ENCODE measurements at regions of chr6 and their contacts with region 1.

Region 1: DNA sequence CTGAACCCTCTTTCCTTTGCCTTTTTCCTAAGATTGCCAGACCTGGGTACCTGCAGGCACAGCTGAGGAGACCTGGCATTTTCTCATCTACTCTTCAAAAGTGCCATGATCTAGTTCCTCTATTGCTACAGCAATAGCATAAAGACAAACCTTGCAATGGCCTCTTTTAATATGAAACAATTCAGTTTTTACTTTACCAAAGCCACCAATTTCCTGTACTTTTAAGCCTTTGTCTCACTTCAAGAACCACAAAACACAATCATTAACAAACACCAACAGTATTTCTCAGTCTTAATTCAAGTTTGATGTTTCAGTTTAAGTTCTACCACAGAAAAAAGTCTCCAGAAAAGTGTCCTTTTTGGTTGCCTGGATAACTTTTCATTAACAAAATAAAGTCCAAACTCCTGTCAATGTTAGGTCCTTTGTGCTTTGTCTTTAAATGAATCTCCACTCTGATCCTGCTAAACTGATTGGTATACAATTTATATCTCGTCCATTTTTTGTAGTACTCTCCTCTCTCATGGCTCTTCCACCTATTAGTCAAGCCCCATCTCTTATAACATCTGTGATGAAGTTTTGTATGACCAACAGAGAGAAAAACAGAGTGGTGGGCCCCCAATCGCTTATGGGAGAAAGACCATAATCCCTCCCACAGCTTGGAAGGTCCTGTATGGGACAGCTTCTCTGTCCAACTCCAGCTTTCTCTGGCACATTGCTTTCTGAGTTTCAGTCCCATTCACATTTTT is 50.5 kb upstream of the THEMIS start:
- DNase-seq: peak in 7 of 9 donors; percentile 31 to 78 (median 69)
- ATAC-seq: peak; percentile 77
- H3K4me3 ChIP-seq: peak overlapping the region; percentile 21
- H3K4me3 Mint-ChIP-seq: peak overlapping the region; percentile 70 to 84 (median 79)
- H3K27ac ChIP-seq: peak overlapping the region; percentile 30
- H3K27ac Mint-ChIP-seq: peak overlapping the region; percentile 84 to 94 (median 91)
- H3K4me1 ChIP-seq: peaks cover 35 to 42% of the 10 kb centered on the region in 2 donors
- H3K4me1 Mint-ChIP-seq: peaks cover 32 to 74% (median 62%) of the 10 kb centered on the region in 7 donors
- H3K27me3 ChIP-seq: no peaks in the 10 kb centered on the region
- H3K27me3 Mint-ChIP-seq: no peaks in the 10 kb centered on the region

Region 2: DNA sequence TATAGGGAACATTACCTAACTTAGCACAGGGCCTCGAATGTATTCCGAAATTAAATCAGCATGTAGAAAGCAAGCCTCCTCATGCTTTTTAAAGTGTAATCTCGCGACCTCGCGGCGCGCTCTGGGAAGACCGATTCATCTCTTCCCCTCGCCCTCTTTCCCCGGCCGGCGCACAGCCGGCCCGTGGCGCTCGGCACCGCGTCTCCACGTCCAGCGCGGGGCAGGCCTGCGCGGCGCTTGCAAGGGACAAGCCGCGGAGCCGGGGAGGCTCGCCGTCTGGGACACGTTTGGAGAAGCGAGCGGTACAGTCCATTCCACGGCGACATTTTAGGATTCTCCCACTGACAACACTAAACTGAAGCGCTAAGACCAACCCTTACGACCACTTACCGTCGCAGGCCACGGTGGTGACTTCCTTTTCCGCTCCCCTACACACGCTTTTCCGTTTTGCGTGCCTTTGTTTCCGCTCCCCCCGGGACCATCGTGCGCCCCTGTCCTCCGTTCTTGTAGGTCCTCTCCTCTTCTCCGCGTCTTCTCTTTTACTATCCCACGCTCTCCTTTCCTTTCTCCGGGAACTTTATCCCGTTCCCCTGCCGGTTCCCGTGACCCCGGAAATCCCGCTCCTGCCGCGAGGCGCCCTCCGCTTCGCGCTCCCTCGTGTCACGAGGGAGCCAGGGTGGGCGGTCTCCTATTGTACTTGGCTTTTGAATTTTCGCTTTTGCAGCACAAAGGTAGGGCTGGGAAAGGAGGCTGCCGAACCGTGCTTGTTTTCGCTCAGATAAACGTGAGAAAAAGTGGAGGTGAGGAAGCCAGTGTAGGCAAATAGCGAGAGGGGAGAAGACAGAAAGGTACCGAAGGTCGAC is 608.2 kb before region 1 on chr6 and contains the start of gene ECHDC1:
- CTCF ChIA-PET with region 1: no interaction called
- POLR2A ChIA-PET with region 1: no interaction called
- intact Hi-C with region 1: loop called in 1 of 2 experiments (anchors 10 kb)
- DNase-seq: peak; percentile 45 to 76 (median 70)
- ATAC-seq: peak; percentile 87
- H3K4me3 ChIP-seq: peak within 1 kb of the TSS; percentile 83
- H3K4me3 Mint-ChIP-seq: no peak within 1 kb of the TSS
- H3K27ac ChIP-seq: peak within 1 kb of the TSS; percentile 91
- H3K27ac Mint-ChIP-seq: no peak within 1 kb of the TSS
- H3K4me1 ChIP-seq: peaks cover 34 to 39% of the 10 kb centered on the region in 2 donors
- H3K4me1 Mint-ChIP-seq: peaks cover 0 to 12% (median 9%) of the 10 kb centered on the region in 7 donors
- H3K27me3 ChIP-seq: no peaks in the 10 kb centered on the region
- H3K27me3 Mint-ChIP-seq: no peaks in the 10 kb centered on the region
- total RNA-seq, gene ECHDC1: 18.1 to 46.5 (median 34.3) TPM

Region 3: GRCh38 chr6:127918506-127919427 is 32.6 kb before region 1 on chr6:
- CTCF ChIA-PET with region 1: interaction called, 5 read pairs
- POLR2A ChIA-PET with region 1: interaction called, 4 read pairs
- intact Hi-C with region 1: loop called (anchors 1 kb)
- DNase-seq: peak in 7 of 9 donors; percentile 68 to 85 (median 80)
- ATAC-seq: peak; percentile 86
- H3K4me3 ChIP-seq: peak overlapping the region; percentile 79
- H3K4me3 Mint-ChIP-seq: peak overlapping the region; percentile 74 to 96 (median 88)
- H3K27ac ChIP-seq: peak overlapping the region; percentile 50
- H3K27ac Mint-ChIP-seq: peak overlapping the region; percentile 83 to 98 (median 93)
- H3K4me1 ChIP-seq: peaks cover 58 to 65% of the 10 kb centered on the region in 2 donors
- H3K4me1 Mint-ChIP-seq: peaks cover 33 to 95% (median 85%) of the 10 kb centered on the region in 7 donors
- H3K27me3 ChIP-seq: no peaks in the 10 kb centered on the region
- H3K27me3 Mint-ChIP-seq: no peaks in the 10 kb centered on the region

Region 4: GRCh38 chr6:127938701-127939100 is 12.6 kb before region 1 on chr6:
- CTCF ChIA-PET with region 1: interaction called, 4 read pairs
- POLR2A ChIA-PET with region 1: interaction called, 15 read pairs
- intact Hi-C with region 1: loop called (anchors 1 kb)
- DNase-seq: no peak
- ATAC-seq: no peak
- H3K4me3 ChIP-seq: no peak overlapping the region
- H3K4me3 Mint-ChIP-seq: peak overlapping the region in 2 of 10 donors; percentile 14 to 39
- H3K27ac ChIP-seq: no peak overlapping the region
- H3K27ac Mint-ChIP-seq: peak overlapping the region in 5 of 9 donors; percentile 28 to 97 (median 57)
- H3K4me1 ChIP-seq: peaks cover 25 to 40% of the 10 kb centered on the region in 2 donors
- H3K4me1 Mint-ChIP-seq: peaks cover 21 to 81% (median 63%) of the 10 kb centered on the region in 7 donors
- H3K27me3 ChIP-seq: no peaks in the 10 kb centered on the region
- H3K27me3 Mint-ChIP-seq: no peaks in the 10 kb centered on the region

Region 5: DNA sequence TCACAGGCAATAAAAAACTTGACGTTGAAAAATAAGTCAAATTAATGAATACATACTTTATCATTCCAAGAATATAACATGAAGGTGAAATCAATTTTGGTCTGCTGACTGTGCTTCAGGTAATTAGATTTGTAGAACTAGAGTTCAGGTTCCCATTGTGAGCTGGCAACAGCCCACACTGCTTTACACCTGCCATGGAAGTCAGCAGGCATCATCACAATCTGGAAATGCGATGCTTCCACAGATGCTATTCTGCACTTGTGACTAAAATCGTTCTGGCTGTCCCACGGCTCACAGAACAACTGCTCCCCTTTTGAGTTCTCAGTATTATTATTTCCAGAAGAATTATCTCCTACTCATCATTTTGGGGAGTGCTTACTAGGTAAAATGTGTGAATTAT is 12.2 kb after region 1 on chr6:
- CTCF ChIA-PET with region 1: interaction called, 6 read pairs
- POLR2A ChIA-PET with region 1: interaction called, 5 read pairs
- intact Hi-C with region 1: loop called (anchors 1 kb)
- DNase-seq: no peak
- ATAC-seq: no peak
- H3K4me3 ChIP-seq: no peak overlapping the region
- H3K4me3 Mint-ChIP-seq: no peak overlapping the region
- H3K27ac ChIP-seq: no peak overlapping the region
- H3K27ac Mint-ChIP-seq: no peak overlapping the region
- H3K4me1 ChIP-seq: peaks cover 6 to 12% of the 10 kb centered on the region in 2 donors
- H3K4me1 Mint-ChIP-seq: peaks cover 4 to 32% (median 19%) of the 10 kb centered on the region in 7 donors
- H3K27me3 ChIP-seq: no peaks in the 10 kb centered on the region
- H3K27me3 Mint-ChIP-seq: no peaks in the 10 kb centered on the region

Measured in naive thymus-derived CD4-positive, alpha-beta T cell (primary cell).